ENCODE measurements at regions of chr19 and their contacts with region 1.

Region 1: DNA sequence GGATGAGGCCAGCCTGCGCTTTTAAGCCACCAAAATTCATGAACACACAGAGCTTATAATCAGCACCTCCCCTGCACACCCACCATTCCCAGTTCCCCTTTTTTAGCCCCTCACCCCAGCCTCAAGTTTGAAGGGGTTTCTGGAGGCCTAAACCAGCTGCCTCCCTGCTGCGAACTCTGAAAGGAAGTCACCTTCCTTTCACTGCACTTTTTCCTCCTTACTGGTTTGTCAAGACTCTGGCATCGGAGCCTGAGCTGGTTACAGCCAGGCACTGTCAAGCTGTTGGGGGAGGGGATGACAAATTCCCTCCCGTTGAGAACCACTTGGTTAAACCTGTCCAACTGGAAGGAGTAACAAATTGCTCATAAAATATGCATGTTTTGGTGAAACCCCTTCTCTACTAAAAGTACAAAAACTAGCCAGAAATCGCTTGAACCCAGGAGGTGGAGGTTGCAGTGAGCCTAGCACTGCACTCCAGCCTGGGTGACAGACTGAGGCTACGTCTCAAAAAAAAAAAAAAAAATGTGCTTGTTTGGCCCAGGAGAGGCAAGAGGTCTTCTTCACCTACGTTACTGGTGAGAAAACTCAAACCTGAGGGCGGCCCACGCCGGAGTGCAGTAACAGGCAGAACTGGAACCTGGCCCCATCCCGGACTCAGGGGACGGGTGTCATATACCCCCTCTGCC is 671 bp upstream of the ADAT3 start:
- DNase-seq: peak; percentile 85 to 93 (median 93)
- H3K4me3 ChIP-seq: peak overlapping the region in 4 of 7 experiments; percentile 32 to 77 (median 75)
- H3K27ac ChIP-seq: peak overlapping the region in 1 of 2 experiments; percentile 78
- H3K4me1 ChIP-seq: peaks cover 2 to 52% (median 43%) of the 10 kb centered on the region in 4 experiments
- H3K27me3 ChIP-seq: no peaks in the 10 kb centered on the region

Region 2: DNA sequence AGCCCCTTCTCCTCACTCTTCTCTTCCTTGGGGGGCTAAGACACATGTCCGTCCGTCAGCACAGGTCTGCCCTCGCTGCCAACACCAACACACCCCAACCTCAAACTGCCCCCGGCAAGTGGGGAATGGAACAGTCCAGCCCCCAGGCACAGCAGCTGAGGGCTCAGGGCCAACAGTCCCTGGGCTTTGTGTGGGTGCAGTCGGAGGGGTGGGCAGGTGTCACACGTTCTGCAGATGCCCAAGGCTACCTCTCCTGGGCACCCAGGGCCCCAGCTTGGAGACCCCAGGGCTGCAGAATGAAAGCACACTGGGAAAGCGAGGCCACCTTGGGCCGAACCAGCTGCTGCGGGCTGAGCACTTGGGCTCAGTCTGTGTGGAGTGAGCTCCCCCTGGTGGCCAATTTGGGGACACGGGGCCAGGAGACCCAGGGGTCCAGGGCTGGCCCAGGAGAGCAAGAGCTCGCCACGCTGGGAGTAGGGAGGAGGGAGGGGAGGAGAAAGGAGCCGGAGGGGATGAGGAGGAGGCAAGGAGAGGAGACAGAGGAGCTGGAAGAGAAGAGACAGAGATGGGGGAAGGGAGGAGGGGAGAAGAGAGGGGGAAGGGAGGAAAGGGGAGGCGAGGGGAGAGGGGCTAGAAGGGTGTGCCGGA is 78.5 kb before region 1 on chr19:
- CTCF ChIA-PET with region 1: no interaction called
- POLR2A ChIA-PET with region 1: no interaction called
- DNase-seq: peak; percentile 65 to 83 (median 76)
- H3K4me3 ChIP-seq: no peak overlapping the region
- H3K27ac ChIP-seq: peak overlapping the region in 1 of 2 experiments; percentile 38
- H3K4me1 ChIP-seq: no peaks in the 10 kb centered on the region
- H3K27me3 ChIP-seq: no peaks in the 10 kb centered on the region

Region 3: GRCh38 chr19:1863726-1864480 is 40.6 kb before region 1 on chr19:
- CTCF ChIA-PET with region 1: interaction called, 10 read pairs
- POLR2A ChIA-PET with region 1: no interaction called
- DNase-seq: peak; percentile 91 to 96 (median 95)
- H3K4me3 ChIP-seq: peak overlapping the region; percentile 58 to 87 (median 76)
- H3K27ac ChIP-seq: peak overlapping the region; percentile 70 to 84
- H3K4me1 ChIP-seq: peaks cover 0 to 46% (median 43%) of the 10 kb centered on the region in 4 experiments
- H3K27me3 ChIP-seq: no peaks in the 10 kb centered on the region

Region 4: DNA sequence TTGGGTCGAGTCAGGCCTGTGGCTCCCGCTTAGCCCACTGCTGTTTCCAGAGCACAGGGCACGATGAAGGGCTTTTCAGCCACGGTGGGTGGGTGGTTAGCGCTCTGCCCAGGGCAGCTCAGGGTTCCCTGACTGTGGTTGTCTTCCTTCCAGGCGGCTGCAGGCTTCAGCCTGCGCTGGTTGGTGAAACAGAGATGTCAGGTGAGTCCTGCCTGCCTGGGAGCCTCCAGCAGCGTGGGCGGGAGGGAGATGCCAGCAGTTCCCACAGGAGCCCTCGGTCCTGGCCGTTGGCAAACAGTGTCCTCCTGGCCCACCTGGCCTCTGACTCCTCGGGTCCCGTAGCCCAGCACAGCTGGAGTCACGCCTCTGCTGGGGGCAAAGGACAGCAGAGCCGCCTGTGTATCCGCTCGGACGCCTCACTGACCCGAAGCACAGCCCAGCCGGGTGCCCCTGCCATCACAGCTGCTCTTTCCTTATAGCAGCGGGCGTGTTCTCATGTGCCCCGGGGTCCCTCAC is 10.4 kb after region 1 on chr19:
- CTCF ChIA-PET with region 1: no interaction called
- POLR2A ChIA-PET with region 1: no interaction called
- DNase-seq: no peak
- H3K4me3 ChIP-seq: no peak overlapping the region
- H3K27ac ChIP-seq: no peak overlapping the region
- H3K4me1 ChIP-seq: peaks cover 0 to 16% (median 12%) of the 10 kb centered on the region in 4 experiments
- H3K27me3 ChIP-seq: no peaks in the 10 kb centered on the region

Region 5: GRCh38 chr19:1929021-1929742 is 24.7 kb after region 1 on chr19:
- CTCF ChIA-PET with region 1: interaction called, 18 read pairs
- POLR2A ChIA-PET with region 1: no interaction called
- DNase-seq: peak; percentile 78 to 87 (median 86)
- H3K4me3 ChIP-seq: peak overlapping the region in 6 of 7 experiments; percentile 39 to 77 (median 60)
- H3K27ac ChIP-seq: no peak overlapping the region
- H3K4me1 ChIP-seq: peaks cover 0 to 16% (median 11%) of the 10 kb centered on the region in 4 experiments
- H3K27me3 ChIP-seq: no peaks in the 10 kb centered on the region

Region 6: GRCh38 chr19:2221918-2222317 is 317.4 kb after region 1 on chr19:
- CTCF ChIA-PET with region 1: no interaction called
- POLR2A ChIA-PET with region 1: no interaction called
- DNase-seq: peak in 1 of 3 donors; percentile 26
- H3K4me3 ChIP-seq: no peak overlapping the region
- H3K27ac ChIP-seq: no peak overlapping the region
- H3K4me1 ChIP-seq: no peaks in the 10 kb centered on the region
- H3K27me3 ChIP-seq: no peaks in the 10 kb centered on the region